Activated CD4-positive, alpha-beta T cell treated with anti-CD3 and anti-CD28 coated beads for 36 hours (primary cell): ENCODE measurements at regions of chr9 and their contacts with region 1.

Region 1: DNA sequence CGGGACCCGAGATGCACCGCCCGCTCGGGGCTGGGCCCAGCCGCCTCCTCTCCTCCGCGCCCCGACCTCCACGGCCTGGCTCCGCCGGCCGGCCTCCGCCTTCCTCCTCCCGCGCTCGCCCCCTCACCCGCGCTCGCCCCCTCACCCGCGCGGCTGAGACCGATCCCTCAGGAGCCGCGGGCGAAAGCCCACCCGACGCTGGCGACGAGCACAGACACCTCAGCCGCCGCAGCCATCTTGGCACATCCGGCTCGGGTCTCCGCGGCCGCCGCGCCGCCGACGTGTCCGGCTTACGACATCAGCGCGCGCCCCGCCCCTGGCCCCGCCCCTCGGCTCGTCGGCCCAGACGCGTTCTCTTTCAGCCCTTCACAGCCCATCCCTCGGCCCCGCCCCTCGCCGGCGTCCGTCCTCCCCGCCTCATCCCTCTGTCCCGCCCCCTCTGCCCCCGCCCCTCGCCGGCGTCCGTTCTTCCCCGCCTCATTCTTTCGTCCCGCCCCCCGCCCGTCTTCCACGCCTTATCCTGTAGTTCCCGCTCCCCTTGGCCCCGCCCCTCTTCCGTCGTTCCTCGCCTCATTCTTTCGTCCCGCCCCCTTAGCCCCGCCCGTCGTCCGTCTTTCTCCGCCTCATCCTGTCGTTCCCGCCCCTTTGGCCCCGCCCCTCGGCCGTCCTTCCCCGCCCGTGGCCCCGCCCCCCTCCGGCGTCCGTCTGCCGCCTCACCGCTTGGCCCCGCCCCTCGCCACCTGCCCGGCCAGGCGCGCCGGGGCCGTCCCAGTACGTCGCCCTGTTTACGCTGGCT is at the start of gene SEC16A:
- DNase-seq: peak; percentile 100
- ATAC-seq: peak; percentile 76
- H3K4me3 Mint-ChIP-seq: peak within 1 kb of the TSS; percentile 97
- H3K27ac Mint-ChIP-seq: peak within 1 kb of the TSS; percentile 98
- H3K4me1 Mint-ChIP-seq: peaks cover 35% of the 10 kb centered on the region
- H3K27me3 Mint-ChIP-seq: no peaks in the 10 kb centered on the region
- total RNA-seq, gene SEC16A: 62.7 TPM

Region 2: DNA sequence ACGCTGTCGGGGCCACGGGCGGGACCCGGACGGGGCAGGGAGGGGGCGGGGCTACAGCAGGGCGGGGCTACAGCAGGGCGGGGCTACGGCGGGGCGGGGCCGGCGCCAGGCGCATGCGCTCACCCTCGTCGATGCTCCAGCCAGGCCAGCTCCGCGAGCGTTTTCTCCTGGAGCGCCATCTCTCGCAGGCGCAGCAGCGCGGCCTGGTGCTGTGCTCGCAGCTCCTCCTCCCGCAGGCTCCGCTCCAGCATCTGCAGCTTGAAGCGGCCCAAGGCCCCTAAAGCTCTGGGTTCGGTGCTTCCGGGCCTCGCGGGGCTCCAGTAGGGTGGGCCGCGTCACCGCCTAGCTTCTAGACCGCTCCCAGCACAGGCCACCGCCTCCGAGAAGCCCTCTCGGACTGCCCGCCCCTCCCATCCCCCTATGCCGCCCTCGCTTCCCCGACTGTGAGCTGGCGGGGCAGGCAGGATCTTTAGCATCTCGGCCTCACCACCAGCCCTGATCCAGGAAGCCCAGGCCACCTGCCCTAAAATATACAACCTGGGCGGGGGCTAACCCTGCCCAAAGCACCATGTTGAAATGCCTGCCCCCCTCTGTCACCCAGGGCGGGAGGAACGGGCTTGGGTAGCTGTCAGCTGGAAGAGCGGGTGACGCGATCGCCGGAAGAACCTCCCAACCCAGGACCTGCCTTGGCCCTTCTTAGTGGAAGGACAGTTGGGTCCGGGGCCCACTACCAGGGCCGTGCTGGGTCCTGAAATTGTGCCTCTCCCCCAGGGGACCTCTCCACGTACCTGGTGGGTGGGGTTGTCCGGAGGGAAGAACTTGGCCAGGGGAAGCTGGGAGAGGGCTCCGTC is 215.5 kb before region 1 on chr9:
- CTCF ChIA-PET with region 1: no interaction called
- POLR2A ChIA-PET with region 1: no interaction called
- intact Hi-C with region 1: loop called in 1 of 2 experiments (anchors 1 kb)
- DNase-seq: peak; percentile 92
- ATAC-seq: peak; percentile 99
- H3K4me3 Mint-ChIP-seq: peak overlapping the region; percentile 69
- H3K27ac Mint-ChIP-seq: peak overlapping the region; percentile 58
- H3K4me1 Mint-ChIP-seq: peaks cover 6% of the 10 kb centered on the region
- H3K27me3 Mint-ChIP-seq: no peaks in the 10 kb centered on the region

Region 3: GRCh38 chr9:136354592-136355085 is 128.4 kb before region 1 on chr9:
- CTCF ChIA-PET with region 1: no interaction called
- POLR2A ChIA-PET with region 1: no interaction called
- intact Hi-C with region 1: no loop called
- DNase-seq: no peak
- ATAC-seq: no peak
- H3K4me3 Mint-ChIP-seq: no peak overlapping the region
- H3K27ac Mint-ChIP-seq: no peak overlapping the region
- H3K4me1 Mint-ChIP-seq: no peaks in the 10 kb centered on the region
- H3K27me3 Mint-ChIP-seq: no peaks in the 10 kb centered on the region

Region 4: DNA sequence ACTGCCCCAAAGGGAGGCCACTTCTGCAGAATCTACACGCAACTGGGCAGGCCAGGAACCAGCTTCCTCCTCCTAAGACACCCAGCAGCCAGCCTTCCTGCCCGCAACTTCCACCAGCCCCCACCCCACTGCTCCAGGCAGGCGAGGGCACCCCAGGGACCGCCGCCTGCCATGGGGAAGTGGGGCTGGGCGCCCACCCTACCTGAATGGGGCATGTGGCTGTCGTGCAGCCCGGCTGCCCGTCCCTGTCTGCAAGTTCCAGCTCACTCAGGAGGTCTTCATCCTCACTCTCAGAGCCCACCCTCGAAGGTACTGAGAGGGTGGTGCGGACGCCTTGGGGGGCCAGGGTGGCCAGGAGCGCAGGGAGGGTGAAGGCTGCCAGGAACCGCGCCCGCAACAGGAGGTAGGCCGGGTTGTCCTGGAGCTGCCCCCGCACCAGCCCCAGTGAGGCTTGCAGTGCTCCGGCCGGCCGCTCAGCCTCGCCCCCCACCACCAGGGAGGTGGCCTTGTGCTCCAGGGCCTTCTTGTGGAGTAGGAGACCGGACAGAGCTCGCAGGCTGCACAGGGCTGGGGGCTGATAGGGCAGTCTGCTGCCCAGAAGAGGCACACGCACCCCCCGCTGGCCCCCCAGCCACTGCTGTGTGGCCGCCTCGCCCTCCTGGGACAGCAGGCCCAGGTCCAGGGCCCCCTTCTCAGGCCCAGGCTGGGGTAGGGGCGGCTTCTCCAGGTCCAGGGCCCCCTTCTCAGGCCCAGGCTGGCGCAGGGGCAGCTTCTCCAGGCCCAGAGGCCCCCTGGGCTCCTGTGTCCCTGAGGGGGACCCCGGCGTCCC is 105.4 kb before region 1 on chr9:
- CTCF ChIA-PET with region 1: no interaction called
- POLR2A ChIA-PET with region 1: no interaction called
- intact Hi-C with region 1: no loop called
- DNase-seq: no peak
- ATAC-seq: no peak
- H3K4me3 Mint-ChIP-seq: no peak overlapping the region
- H3K27ac Mint-ChIP-seq: no peak overlapping the region
- H3K4me1 Mint-ChIP-seq: no peaks in the 10 kb centered on the region
- H3K27me3 Mint-ChIP-seq: no peaks in the 10 kb centered on the region

Region 5: GRCh38 chr9:136512651-136513071 is 29.7 kb after region 1 on chr9:
- CTCF ChIA-PET with region 1: no interaction called
- POLR2A ChIA-PET with region 1: no interaction called
- intact Hi-C with region 1: no loop called
- DNase-seq: peak; percentile 72
- ATAC-seq: peak; percentile 86
- H3K4me3 Mint-ChIP-seq: no peak overlapping the region
- H3K27ac Mint-ChIP-seq: no peak overlapping the region
- H3K4me1 Mint-ChIP-seq: no peaks in the 10 kb centered on the region
- H3K27me3 Mint-ChIP-seq: no peaks in the 10 kb centered on the region

Region 6: GRCh38 chr9:136533775-136534157 is 50.8 kb after region 1 on chr9:
- CTCF ChIA-PET with region 1: interaction called, 14 read pairs
- POLR2A ChIA-PET with region 1: no interaction called
- intact Hi-C with region 1: loop called in 1 of 2 experiments (anchors 2 kb)
- DNase-seq: peak; percentile 91
- ATAC-seq: peak; percentile 69
- H3K4me3 Mint-ChIP-seq: peak overlapping the region; percentile 59
- H3K27ac Mint-ChIP-seq: peak overlapping the region; percentile 82
- H3K4me1 Mint-ChIP-seq: peaks cover 60% of the 10 kb centered on the region
- H3K27me3 Mint-ChIP-seq: no peaks in the 10 kb centered on the region

Region 7: GRCh38 chr9:136686794-136687711 is 204.1 kb after region 1 on chr9 and contains the start of gene AGPAT2:
- CTCF ChIA-PET with region 1: interaction called, 3 read pairs
- POLR2A ChIA-PET with region 1: no interaction called
- intact Hi-C with region 1: loop called in 1 of 2 experiments (anchors 1 kb)
- DNase-seq: peak; percentile 84
- ATAC-seq: peak; percentile 91
- H3K4me3 Mint-ChIP-seq: peak within 1 kb of the TSS; percentile 70
- H3K27ac Mint-ChIP-seq: no peak within 1 kb of the TSS
- H3K4me1 Mint-ChIP-seq: no peaks in the 10 kb centered on the region
- H3K27me3 Mint-ChIP-seq: peaks cover 2% of the 10 kb centered on the region
- total RNA-seq, gene AGPAT2: 9.0 to 10.4 TPM

Region 8: GRCh38 chr9:136849038-136849959 is 366.3 kb after region 1 on chr9 and contains the start of gene PHPT1:
- CTCF ChIA-PET with region 1: no interaction called
- POLR2A ChIA-PET with region 1: no interaction called
- intact Hi-C with region 1: loop called in 1 of 2 experiments (anchors 1 kb)
- DNase-seq: peak; percentile 98
- ATAC-seq: peak; percentile 91
- H3K4me3 Mint-ChIP-seq: peak within 1 kb of the TSS; percentile 93
- H3K27ac Mint-ChIP-seq: peak within 1 kb of the TSS; percentile 88
- H3K4me1 Mint-ChIP-seq: peaks cover 8% of the 10 kb centered on the region
- H3K27me3 Mint-ChIP-seq: peaks cover 12% of the 10 kb centered on the region
- total RNA-seq, gene PHPT1: 94.5 to 98.9 TPM

Region 9: GRCh38 chr9:137086531-137087408 is 603.8 kb after region 1 on chr9 and contains the start of gene MAN1B1:
- CTCF ChIA-PET with region 1: no interaction called
- POLR2A ChIA-PET with region 1: no interaction called
- intact Hi-C with region 1: loop called in 1 of 2 experiments (anchors 1 kb)
- DNase-seq: peak; percentile 100
- ATAC-seq: peak; percentile 85
- H3K4me3 Mint-ChIP-seq: peak within 1 kb of the TSS; percentile 88
- H3K27ac Mint-ChIP-seq: peak within 1 kb of the TSS; percentile 96
- H3K4me1 Mint-ChIP-seq: peaks cover 46% of the 10 kb centered on the region
- H3K27me3 Mint-ChIP-seq: no peaks in the 10 kb centered on the region
- total RNA-seq, gene MAN1B1: 21.6 to 26.7 TPM

Region 10: GRCh38 chr9:137618105-137619067 is 1135.4 kb after region 1 on chr9 and contains the start of gene EHMT1:
- CTCF ChIA-PET with region 1: no interaction called
- POLR2A ChIA-PET with region 1: no interaction called
- intact Hi-C with region 1: loop called in 1 of 2 experiments (anchors 5 kb)
- DNase-seq: peak; percentile 92
- ATAC-seq: peak; percentile 82
- H3K4me3 Mint-ChIP-seq: peak within 1 kb of the TSS; percentile 85
- H3K27ac Mint-ChIP-seq: peak within 1 kb of the TSS; percentile 90
- H3K4me1 Mint-ChIP-seq: peaks cover 37% of the 10 kb centered on the region
- H3K27me3 Mint-ChIP-seq: no peaks in the 10 kb centered on the region
- total RNA-seq, gene EHMT1: 66.6 to 76.7 TPM